WTC11 (cell line): ENCODE measurements at regions of chr17 and their contacts with region 1.

Region 1: DNA sequence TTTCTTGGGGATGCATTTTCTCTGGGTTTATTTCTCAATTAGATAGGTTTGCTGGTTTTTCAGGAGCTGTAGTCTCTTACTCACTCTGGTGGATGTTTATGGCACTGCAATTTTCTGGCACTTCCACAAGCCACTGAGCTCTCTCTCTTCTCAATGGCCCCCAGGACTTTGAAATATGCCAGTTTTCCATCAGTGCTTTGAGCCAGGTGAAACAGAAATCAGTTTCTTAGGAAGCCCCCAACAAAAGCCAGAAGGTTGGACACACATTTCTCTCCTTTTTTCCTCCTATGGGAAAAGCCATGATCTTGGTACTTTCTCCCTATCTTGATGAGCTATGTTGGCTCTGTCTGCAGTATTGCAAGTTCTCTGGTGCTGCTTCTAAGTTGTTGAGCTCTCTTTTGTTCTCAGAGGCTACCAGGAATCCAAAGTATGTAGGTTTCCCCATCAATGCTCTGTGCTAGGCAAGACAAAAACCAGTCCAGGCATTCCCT is 90.7 kb upstream of the SMIM36 start:
- DNase-seq: peak; percentile 21
- ATAC-seq: peak; percentile 99
- H3K4me3 Mint-ChIP-seq: no peak overlapping the region
- H3K27ac Mint-ChIP-seq: peak overlapping the region; percentile 42; the same call in 1 of the 2 replicates
- H3K4me1 Mint-ChIP-seq: peaks cover 11% of the 10 kb centered on the region
- H3K27me3 Mint-ChIP-seq: no peaks in the 10 kb centered on the region
- CTCF ChIP-seq: peak; percentile 58

Region 2: DNA sequence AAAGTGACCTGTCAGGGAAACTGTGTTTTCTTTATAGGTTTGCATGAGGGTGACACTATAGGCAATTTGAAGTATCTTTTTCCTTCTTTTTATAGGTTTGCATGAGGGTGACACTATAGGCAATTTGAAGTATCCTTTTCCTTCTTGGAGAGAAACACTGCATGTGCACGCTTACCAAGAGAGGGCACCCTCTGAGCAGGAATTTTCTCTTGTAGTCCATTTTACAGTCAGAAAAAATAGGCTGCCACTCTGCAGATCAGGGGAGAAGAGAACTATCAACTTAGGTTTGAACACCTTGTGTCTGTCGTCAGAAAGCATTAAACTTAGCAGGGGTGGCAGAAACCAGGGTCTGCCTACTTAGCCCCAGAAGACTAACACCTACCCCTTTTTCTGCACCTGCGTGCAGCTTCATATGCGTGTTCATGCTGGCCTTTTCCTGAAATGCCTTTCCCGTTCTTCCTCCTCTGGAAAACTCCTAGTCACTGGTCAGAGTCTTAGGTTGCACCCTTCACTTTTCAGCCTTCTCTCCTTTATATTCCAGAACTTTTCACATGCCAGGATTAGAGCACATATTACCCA is 74.3 kb before region 1 on chr17:
- CTCF ChIA-PET with region 1: interaction called, 37 read pairs
- POLR2A ChIA-PET with region 1: no interaction called
- DNase-seq: peak; percentile 34
- ATAC-seq: peak; percentile 87
- H3K4me3 Mint-ChIP-seq: no peak overlapping the region
- H3K27ac Mint-ChIP-seq: no peak overlapping the region
- H3K4me1 Mint-ChIP-seq: no peaks in the 10 kb centered on the region
- H3K27me3 Mint-ChIP-seq: no peaks in the 10 kb centered on the region
- CTCF ChIP-seq: no peak

Region 3: DNA sequence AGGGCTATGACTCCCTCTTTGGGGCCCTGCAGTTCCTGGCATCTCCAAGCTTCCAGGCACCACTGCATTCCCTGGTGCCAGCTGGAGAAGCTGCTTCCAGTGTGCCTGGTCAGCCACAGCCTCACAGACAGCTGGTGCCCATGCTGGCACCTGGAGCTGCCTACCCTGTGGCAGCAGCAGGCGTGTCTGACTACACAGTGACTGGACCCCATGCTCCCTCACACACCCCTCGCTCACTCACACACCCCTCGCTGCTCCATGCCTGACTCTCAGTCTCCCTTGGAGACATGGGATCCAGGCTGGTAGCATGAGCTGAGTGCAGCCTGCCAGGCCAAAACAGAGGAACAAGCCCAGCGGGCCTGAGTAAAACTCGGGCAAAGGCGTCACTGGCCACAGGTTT is 31.6 kb before region 1 on chr17:
- CTCF ChIA-PET with region 1: interaction called, 12 read pairs
- POLR2A ChIA-PET with region 1: no interaction called
- DNase-seq: no peak
- ATAC-seq: peak; percentile 22; the same call in 1 of the 2 replicates
- H3K4me3 Mint-ChIP-seq: no peak overlapping the region
- H3K27ac Mint-ChIP-seq: no peak overlapping the region; the same call in 1 of the 2 replicates
- H3K4me1 Mint-ChIP-seq: peaks cover 27% of the 10 kb centered on the region
- H3K27me3 Mint-ChIP-seq: no peaks in the 10 kb centered on the region
- CTCF ChIP-seq: no peak

Region 4: GRCh38 chr17:55641676-55642081 is 39.8 kb after region 1 on chr17:
- CTCF ChIA-PET with region 1: interaction called, 15 read pairs
- POLR2A ChIA-PET with region 1: no interaction called
- DNase-seq: peak; percentile 52
- ATAC-seq: peak; percentile 64
- H3K4me3 Mint-ChIP-seq: no peak overlapping the region
- H3K27ac Mint-ChIP-seq: no peak overlapping the region
- H3K4me1 Mint-ChIP-seq: peaks cover 21% of the 10 kb centered on the region
- H3K27me3 Mint-ChIP-seq: no peaks in the 10 kb centered on the region; the same call in 1 of the 2 replicates
- CTCF ChIP-seq: no peak

Region 5: GRCh38 chr17:55770148-55770870 is 168.4 kb after region 1 on chr17:
- CTCF ChIA-PET with region 1: interaction called, 10 read pairs
- POLR2A ChIA-PET with region 1: no interaction called
- DNase-seq: no peak
- ATAC-seq: peak; percentile 77
- H3K4me3 Mint-ChIP-seq: no peak overlapping the region
- H3K27ac Mint-ChIP-seq: no peak overlapping the region
- H3K4me1 Mint-ChIP-seq: peaks cover 4% of the 10 kb centered on the region; the same call in 1 of the 2 replicates
- H3K27me3 Mint-ChIP-seq: no peaks in the 10 kb centered on the region
- CTCF ChIP-seq: no peak